ENCODE measurements at regions of chr18 and their contacts with region 1.

Region 1: GRCh38 chr18:48030616-48031480 is 100.4 kb upstream of the SMAD2 start:
- DNase-seq: no peak

Region 2: GRCh38 chr18:47095810-47096209 is 935.0 kb before region 1 on chr18:
- intact Hi-C with region 1: loop called in 1 of 2 experiments (anchors 5 kb)
- DNase-seq: no peak

Region 3: GRCh38 chr18:47492691-47493090 is 538.2 kb before region 1 on chr18:
- intact Hi-C with region 1: no loop called
- DNase-seq: no peak

Region 4: DNA sequence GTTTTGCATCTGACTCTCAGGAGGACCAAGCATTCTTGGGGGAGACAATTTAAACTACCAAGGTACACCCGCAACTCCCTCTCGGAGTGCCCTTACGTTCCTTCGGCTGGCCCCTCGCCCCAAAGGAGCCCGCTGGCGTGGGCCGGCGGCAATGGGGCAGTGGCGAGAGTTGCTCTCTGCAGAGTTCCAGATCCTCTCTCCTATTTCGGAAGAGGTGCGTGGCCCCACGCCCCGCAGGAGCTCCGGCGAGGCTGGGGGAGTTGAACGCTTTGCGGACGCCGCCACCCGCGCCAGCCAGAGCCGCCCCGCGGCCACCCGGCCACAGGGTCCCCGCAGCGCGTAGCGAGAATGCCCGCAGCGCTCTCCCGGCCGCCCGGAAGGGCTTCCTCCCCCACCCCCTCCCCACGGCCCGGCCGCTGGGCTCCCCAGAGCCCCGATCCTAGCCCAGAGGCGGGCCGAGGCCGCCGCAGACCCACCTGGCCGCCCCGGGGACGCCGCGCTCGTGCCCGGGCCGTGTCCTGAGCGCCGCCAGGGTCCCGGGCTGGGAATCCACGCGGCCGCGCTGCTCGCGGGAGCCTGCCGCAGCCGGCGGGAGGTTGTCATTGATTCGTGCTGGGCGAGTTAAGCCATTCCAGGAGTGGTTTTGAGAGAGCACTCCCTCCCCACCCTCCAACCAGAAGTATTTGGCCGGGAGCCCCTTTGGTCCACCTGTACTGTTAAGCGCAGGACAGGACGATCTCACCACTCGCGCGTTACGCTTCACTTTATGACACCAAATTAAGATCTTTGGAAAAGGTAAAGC is 105.9 kb after region 1 on chr18:
- intact Hi-C with region 1: loop called in 1 of 2 experiments (anchors 10 kb)
- DNase-seq: no peak

Region 5: DNA sequence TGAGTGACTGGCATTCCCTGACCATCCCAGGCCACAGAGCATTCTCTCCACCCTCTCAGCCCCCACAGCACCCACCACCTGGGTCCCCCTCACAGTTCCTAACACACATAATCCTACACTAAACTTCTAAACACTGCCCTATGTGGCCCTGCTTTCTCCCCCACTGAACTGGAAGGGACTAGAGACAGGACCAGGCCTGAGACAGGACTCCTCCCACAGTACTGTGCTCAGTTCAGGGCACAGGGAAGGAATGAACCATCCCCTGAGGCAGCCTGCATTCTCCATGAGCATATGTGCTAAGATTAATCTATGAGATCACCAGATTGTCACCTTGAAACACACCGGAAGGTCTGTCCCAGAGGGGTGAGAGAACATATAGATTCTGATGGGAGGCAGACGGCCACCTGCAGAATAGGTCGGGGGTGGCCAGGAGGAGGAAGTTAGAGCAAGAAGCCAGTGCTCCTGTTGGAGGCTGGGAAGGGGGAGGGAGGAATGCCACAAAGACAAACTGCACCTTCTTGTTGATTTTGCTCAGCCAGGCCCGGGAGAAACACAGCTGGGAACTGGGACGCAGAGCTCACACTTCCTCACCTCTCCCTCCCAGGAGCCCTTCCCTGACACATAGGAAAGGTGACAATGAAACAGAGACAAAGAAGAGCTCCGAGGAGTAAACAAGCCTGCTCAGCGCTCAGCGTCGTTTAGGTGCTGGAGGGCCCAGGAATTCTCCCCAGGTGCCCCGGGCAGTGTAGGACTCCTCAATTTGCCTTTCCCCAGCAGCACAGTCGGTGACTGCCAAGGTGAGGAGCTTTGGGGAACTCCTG is 326.2 kb after region 1 on chr18:
- intact Hi-C with region 1: loop called in 1 of 2 experiments (anchors 10 kb)
- DNase-seq: no peak

Region 6: GRCh38 chr18:48445540-48445939 is 414.7 kb after region 1 on chr18:
- intact Hi-C with region 1: loop called (anchors 2 to 5 kb)
- DNase-seq: peak; percentile 89